ENCODE measurements at regions of chr18 and their contacts with region 1.

Region 1: GRCh38 chr18:63518178-63519012 is 23.8 kb upstream of the SERPINB12 start:
- DNase-seq: peak; percentile 4 to 67 (median 34)
- H3K4me3 ChIP-seq: no peak overlapping the region
- H3K4me3 Mint-ChIP-seq: no peak overlapping the region
- H3K27ac ChIP-seq: no peak overlapping the region
- H3K27ac Mint-ChIP-seq: no peak overlapping the region
- H3K4me1 ChIP-seq: no peaks in the 10 kb centered on the region
- H3K4me1 Mint-ChIP-seq: peaks cover 0 to 5% (median 0%) of the 10 kb centered on the region in 3 donors
- H3K27me3 ChIP-seq: peaks cover 3% of the 10 kb centered on the region
- H3K27me3 Mint-ChIP-seq: peaks cover 0 to 25% of the 10 kb centered on the region in 2 donors

Region 2: GRCh38 chr18:63320046-63320689 is 198.2 kb before region 1 on chr18:
- CTCF ChIA-PET with region 1: no interaction called
- POLR2A ChIA-PET with region 1: no interaction called
- DNase-seq: peak; percentile 81 to 93 (median 89)
- H3K4me3 ChIP-seq: peak overlapping the region; percentile 34
- H3K4me3 Mint-ChIP-seq: peak overlapping the region; percentile 87 to 99 (median 92)
- H3K27ac ChIP-seq: no peak overlapping the region
- H3K27ac Mint-ChIP-seq: peak overlapping the region; percentile 65 to 95 (median 90)
- H3K4me1 ChIP-seq: peaks cover 13% of the 10 kb centered on the region
- H3K4me1 Mint-ChIP-seq: peaks cover 30 to 56% (median 54%) of the 10 kb centered on the region in 3 donors
- H3K27me3 ChIP-seq: no peaks in the 10 kb centered on the region
- H3K27me3 Mint-ChIP-seq: no peaks in the 10 kb centered on the region

Region 3: DNA sequence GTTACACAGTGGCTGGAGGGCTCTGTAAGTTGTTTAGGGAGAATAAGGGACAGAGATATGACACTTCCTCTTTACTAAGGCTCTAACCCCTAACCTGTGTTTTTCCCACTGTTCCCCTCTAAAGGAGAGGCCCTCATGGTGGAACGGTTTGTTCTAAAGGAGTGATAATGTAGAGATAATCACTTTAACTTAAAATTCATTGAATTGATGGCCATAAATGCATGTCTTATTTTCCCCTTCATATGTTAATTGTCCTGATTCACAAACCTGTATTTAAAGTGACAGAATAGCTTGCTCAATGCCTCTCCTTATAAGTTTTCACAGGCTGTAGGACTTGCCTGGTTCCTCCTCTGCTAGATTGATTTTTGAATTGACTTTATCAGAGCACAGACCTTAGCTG is 23.7 kb after region 1 on chr18 and contains the start of gene SERPINB12:
- CTCF ChIA-PET with region 1: no interaction called
- POLR2A ChIA-PET with region 1: no interaction called
- DNase-seq: no peak
- H3K4me3 ChIP-seq: no peak within 1 kb of the TSS
- H3K4me3 Mint-ChIP-seq: no peak within 1 kb of the TSS
- H3K27ac ChIP-seq: no peak within 1 kb of the TSS
- H3K27ac Mint-ChIP-seq: no peak within 1 kb of the TSS
- H3K4me1 ChIP-seq: no peaks in the 10 kb centered on the region
- H3K4me1 Mint-ChIP-seq: no peaks in the 10 kb centered on the region
- H3K27me3 ChIP-seq: no peaks in the 10 kb centered on the region
- H3K27me3 Mint-ChIP-seq: peaks cover 6 to 49% of the 10 kb centered on the region in 2 donors
- total RNA-seq, gene SERPINB12: not detected

Region 4: DNA sequence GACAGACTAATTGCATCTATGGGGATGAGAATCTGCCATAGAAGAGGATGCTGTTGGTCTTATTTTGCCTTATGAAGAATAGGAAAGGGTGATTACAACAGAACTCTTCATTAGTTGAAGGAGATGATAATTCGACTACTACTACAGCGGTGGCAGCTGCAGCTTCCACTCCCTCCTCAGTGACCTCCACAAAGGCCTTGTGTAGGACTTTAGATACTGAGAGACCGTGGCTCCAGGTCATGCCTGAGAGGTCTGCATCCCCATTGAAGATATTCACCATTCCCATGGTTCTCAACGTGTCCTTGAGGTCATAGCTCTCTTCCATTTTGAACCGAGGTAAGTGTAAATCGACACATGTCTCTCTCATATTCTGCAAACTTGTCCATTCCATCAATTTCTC is 119.3 kb after region 1 on chr18:
- CTCF ChIA-PET with region 1: no interaction called
- POLR2A ChIA-PET with region 1: no interaction called
- DNase-seq: no peak
- H3K4me3 ChIP-seq: no peak overlapping the region
- H3K4me3 Mint-ChIP-seq: no peak overlapping the region
- H3K27ac ChIP-seq: no peak overlapping the region
- H3K27ac Mint-ChIP-seq: no peak overlapping the region
- H3K4me1 ChIP-seq: no peaks in the 10 kb centered on the region
- H3K4me1 Mint-ChIP-seq: no peaks in the 10 kb centered on the region
- H3K27me3 ChIP-seq: no peaks in the 10 kb centered on the region
- H3K27me3 Mint-ChIP-seq: no peaks in the 10 kb centered on the region

Region 5: DNA sequence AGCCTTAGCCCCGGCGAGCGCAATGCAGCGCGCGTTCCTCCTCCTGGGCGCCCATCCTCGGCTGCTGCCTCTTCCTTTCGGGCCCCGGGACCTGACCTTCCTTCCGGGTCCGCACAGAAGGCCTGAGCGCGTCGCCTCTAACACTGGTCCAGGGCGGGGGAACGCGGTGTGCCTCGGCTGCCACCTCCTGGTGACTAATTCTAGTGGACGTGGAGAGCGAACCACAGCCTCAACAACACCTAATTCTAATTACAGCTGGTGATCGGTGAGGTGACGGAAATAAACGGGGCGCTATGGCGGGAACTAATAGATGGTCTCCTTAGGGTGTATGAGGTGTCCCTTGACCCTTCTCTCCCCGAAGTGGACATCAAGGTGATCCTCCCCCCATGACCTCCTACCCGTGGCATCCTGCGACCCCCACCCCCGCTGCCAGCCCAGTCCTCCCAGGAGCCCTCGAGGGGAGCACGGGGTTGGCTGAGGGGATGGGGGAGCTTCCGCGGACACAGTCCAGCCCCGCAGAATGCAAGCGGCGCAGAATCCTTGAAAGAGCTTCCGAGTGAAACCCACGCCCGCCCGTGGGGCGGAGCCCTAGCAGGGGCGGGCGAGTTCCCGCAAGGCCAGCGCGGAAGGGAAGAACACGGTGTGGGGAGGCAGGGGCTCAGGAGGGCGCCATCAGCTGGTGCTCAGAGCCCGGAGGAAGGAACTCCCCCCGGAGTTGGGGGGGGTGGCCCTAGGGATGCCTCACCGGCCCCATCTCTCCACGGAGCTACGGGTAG is 417.9 kb after region 1 on chr18:
- CTCF ChIA-PET with region 1: interaction called, 22 read pairs
- POLR2A ChIA-PET with region 1: no interaction called
- DNase-seq: peak; percentile 8 to 65 (median 40)
- H3K4me3 ChIP-seq: peak overlapping the region; percentile 62
- H3K4me3 Mint-ChIP-seq: peak overlapping the region; percentile 57 to 87 (median 78)
- H3K27ac ChIP-seq: no peak overlapping the region
- H3K27ac Mint-ChIP-seq: peak overlapping the region in 2 of 8 donors; percentile 72 to 79
- H3K4me1 ChIP-seq: peaks cover 6% of the 10 kb centered on the region
- H3K4me1 Mint-ChIP-seq: peaks cover 4 to 5% (median 5%) of the 10 kb centered on the region in 3 donors
- H3K27me3 ChIP-seq: peaks cover 7% of the 10 kb centered on the region
- H3K27me3 Mint-ChIP-seq: peaks cover 3 to 7% of the 10 kb centered on the region in 2 donors

Measured in CD8-positive, alpha-beta memory T cell (primary cell).